GM12878 (cell line): ENCODE measurements at regions of chr3 and their contacts with region 1.

Region 1: GRCh38 chr3:154252759-154253638 is 71.3 kb downstream of the DHX36 start:
- DNase-seq: peak; percentile 5
- ATAC-seq: peak; percentile 99
- H3K4me3 ChIP-seq: no peak overlapping the region
- H3K27ac ChIP-seq: no peak overlapping the region
- H3K4me1 ChIP-seq: no peaks in the 10 kb centered on the region
- H3K27me3 ChIP-seq: no peaks in the 10 kb centered on the region
- CTCF ChIP-seq: peak; percentile 81 to 86 (median 84)
- EP300 ChIP-seq: no peak
- POLR2A ChIP-seq: no peak
- RAD21 ChIP-seq: peak; percentile 78

Region 2: DNA sequence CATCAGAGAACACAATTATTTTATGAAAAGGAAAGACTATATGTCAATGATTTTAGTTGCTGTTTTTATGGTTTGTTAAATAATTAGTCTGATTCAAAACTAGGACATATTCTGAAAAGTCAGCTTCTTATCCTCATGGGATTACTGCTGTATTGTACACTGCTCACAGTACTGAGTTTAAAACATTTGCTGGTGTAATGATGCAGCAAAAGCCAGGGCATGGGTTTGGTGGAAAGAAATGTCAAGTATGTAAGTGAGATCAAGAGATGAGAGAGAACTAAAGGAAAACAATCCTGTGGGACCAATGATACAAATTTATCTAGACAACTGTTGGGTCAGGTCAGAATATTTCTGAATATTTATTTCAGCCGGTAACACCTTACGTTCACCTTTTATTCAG is 341.9 kb before region 1 on chr3:
- CTCF ChIA-PET with region 1: no interaction called
- POLR2A ChIA-PET with region 1: no interaction called
- RAD21 ChIA-PET with region 1: no interaction called
- SMC1A ChIA-PET with region 1: no interaction called
- in situ Hi-C with region 1: no loop called
- intact Hi-C with region 1: no loop called
- DNase-seq: no peak
- ATAC-seq: no peak
- H3K4me3 ChIP-seq: no peak overlapping the region
- H3K27ac ChIP-seq: no peak overlapping the region
- H3K4me1 ChIP-seq: no peaks in the 10 kb centered on the region
- H3K27me3 ChIP-seq: no peaks in the 10 kb centered on the region
- CTCF ChIP-seq: no peak
- EP300 ChIP-seq: no peak
- POLR2A ChIP-seq: no peak
- RAD21 ChIP-seq: no peak

Region 3: DNA sequence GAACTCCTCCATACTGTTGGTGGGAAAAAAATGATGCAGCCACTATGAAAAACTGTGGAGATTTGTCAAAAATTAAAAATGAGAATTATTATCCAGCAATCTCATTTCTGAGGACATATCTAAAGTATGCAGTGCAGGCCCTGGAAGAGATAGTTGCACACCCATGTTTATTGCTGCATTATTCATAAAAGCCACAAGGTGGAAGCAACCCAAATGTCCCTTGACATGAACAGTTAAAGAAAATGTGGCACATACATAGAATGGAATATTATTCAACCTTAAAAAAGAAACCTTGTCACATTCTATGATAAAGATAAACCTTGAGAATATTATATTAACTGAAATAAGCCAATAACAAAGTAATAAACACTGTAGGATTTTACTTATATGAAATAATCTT is 212.7 kb before region 1 on chr3:
- CTCF ChIA-PET with region 1: interaction called, 5 read pairs
- POLR2A ChIA-PET with region 1: no interaction called
- RAD21 ChIA-PET with region 1: no interaction called
- SMC1A ChIA-PET with region 1: interaction called, 3 read pairs
- in situ Hi-C with region 1: loop called (anchors 10 kb)
- intact Hi-C with region 1: loop called (anchors 2 kb)
- DNase-seq: no peak
- ATAC-seq: peak; percentile 82
- H3K4me3 ChIP-seq: no peak overlapping the region
- H3K27ac ChIP-seq: no peak overlapping the region
- H3K4me1 ChIP-seq: no peaks in the 10 kb centered on the region
- H3K27me3 ChIP-seq: peaks cover 0 to 3% of the 10 kb centered on the region in 2 experiments; a peak in 1 of 4 replicates
- CTCF ChIP-seq: peak; percentile 25 to 39 (median 34); a peak in 3 of 6 replicates
- EP300 ChIP-seq: no peak
- POLR2A ChIP-seq: no peak
- RAD21 ChIP-seq: peak; percentile 42

Region 4: DNA sequence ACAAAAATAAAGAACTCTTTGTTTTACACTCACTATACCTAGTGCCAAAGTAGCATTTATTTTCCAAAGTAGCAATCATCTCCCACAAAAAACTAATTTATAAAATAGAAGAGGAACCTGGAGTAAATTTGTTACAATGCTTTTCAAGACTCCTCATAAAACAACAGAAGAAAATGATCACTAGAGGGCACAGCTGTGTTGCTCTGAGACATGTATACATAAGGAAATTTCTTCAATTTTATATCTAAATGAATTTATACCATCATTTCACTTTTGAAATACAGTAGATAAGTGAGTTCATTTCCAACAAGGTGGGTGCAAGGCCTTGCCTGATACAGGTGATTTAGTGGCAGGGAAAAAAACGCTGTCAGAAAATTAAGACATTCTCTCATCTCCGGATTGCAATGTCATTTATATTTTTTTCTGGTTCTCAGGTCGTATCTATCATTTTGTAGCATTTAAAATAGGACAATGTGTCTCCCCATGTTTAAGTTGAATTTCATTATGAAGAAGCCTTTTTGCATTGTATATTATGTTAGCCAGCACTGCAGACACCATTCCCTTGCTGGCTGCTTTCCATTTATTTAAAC is 157.1 kb before region 1 on chr3:
- CTCF ChIA-PET with region 1: interaction called, 5 read pairs
- POLR2A ChIA-PET with region 1: no interaction called
- RAD21 ChIA-PET with region 1: no interaction called
- SMC1A ChIA-PET with region 1: no interaction called
- in situ Hi-C with region 1: no loop called
- intact Hi-C with region 1: loop called (anchors 1 kb)
- DNase-seq: no peak
- ATAC-seq: no peak
- H3K4me3 ChIP-seq: no peak overlapping the region
- H3K27ac ChIP-seq: no peak overlapping the region
- H3K4me1 ChIP-seq: no peaks in the 10 kb centered on the region
- H3K27me3 ChIP-seq: no peaks in the 10 kb centered on the region
- CTCF ChIP-seq: no peak; a peak in 1 of 6 replicates
- EP300 ChIP-seq: no peak
- POLR2A ChIP-seq: no peak
- RAD21 ChIP-seq: peak; percentile 35; the same call in 1 of the 2 replicates

Region 5: DNA sequence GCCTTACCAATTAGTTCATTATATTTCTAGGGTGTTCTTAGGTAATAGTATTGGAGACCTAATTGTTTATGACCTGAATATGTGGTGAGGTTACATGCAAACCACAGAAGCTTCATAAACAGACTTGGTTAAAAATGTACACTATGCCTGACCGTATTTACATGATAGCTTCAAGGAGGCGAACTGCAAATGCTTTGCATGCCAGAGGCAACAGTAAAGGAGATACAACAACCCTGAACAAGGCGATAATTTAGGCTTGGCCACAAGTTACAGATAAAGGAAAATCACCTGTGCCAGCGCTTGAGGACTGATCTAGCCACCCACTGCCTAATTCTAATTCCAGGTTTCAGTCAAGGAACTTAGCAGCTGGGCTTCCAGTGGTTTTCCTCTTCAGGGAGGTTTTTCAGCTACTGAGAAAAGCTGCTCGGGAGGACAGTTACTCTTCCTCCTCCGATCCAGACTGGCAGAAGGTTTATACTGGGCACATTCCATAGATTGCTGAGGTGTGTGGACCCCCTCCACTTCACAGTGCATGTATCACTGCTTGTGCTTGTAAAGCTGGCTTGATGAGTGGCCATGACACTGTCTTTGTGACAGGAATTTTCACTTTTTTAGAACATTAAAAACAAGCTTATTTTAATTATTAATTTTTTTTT is 24.3 kb before region 1 on chr3:
- CTCF ChIA-PET with region 1: interaction called, 16 read pairs
- POLR2A ChIA-PET with region 1: no interaction called
- RAD21 ChIA-PET with region 1: interaction called, 4 read pairs
- SMC1A ChIA-PET with region 1: interaction called, 4 read pairs
- in situ Hi-C with region 1: no loop called
- intact Hi-C with region 1: no loop called
- DNase-seq: no peak
- ATAC-seq: no peak
- H3K4me3 ChIP-seq: no peak overlapping the region
- H3K27ac ChIP-seq: no peak overlapping the region
- H3K4me1 ChIP-seq: no peaks in the 10 kb centered on the region
- H3K27me3 ChIP-seq: no peaks in the 10 kb centered on the region
- CTCF ChIP-seq: no peak
- EP300 ChIP-seq: no peak
- POLR2A ChIP-seq: no peak
- RAD21 ChIP-seq: no peak

Region 6: GRCh38 chr3:154334973-154335420 is 82.0 kb after region 1 on chr3:
- CTCF ChIA-PET with region 1: no interaction called
- POLR2A ChIA-PET with region 1: no interaction called
- RAD21 ChIA-PET with region 1: no interaction called
- SMC1A ChIA-PET with region 1: no interaction called
- in situ Hi-C with region 1: no loop called
- intact Hi-C with region 1: no loop called
- DNase-seq: no peak
- ATAC-seq: peak; percentile 61; the same call in 2 of the 3 replicates
- H3K4me3 ChIP-seq: no peak overlapping the region
- H3K27ac ChIP-seq: no peak overlapping the region
- H3K4me1 ChIP-seq: no peaks in the 10 kb centered on the region
- H3K27me3 ChIP-seq: no peaks in the 10 kb centered on the region; a peak in 1 of 4 replicates
- CTCF ChIP-seq: peak; percentile 33 to 47 (median 47); a peak in 2 of 6 replicates
- EP300 ChIP-seq: no peak
- POLR2A ChIP-seq: no peak
- RAD21 ChIP-seq: peak; percentile 53